ENCODE measurements at regions of chr22 and their contacts with region 1.

Region 1: GRCh38 chr22:50326959-50327710 is at the start of gene DENND6B:
- DNase-seq: peak; percentile 97
- H3K4me3 ChIP-seq: peak within 1 kb of the TSS; percentile 59 to 75
- H3K27ac ChIP-seq: peak within 1 kb of the TSS; percentile 62 to 78
- H3K4me1 ChIP-seq: peaks cover 6 to 12% of the 10 kb centered on the region in 2 experiments; a peak in 2 of 4 replicates
- H3K27me3 ChIP-seq: no peaks in the 10 kb centered on the region
- CTCF ChIP-seq: peak; percentile 25; the same call in 1 of the 2 replicates
- EP300 ChIP-seq: 0 out of 4 replicates have a peak, but pooled peaks of 1 of the 2 experiments have one; percentile 6
- RAD21 ChIP-seq: peak; percentile 50; the same call in 1 of the 2 replicates
- polyA plus RNA-seq, gene DENND6B: 5.6 and 5.8 TPM in 2 replicates

Region 2: GRCh38 chr22:50250555-50251476 is 76.3 kb before region 1 on chr22 and contains the start of gene HDAC10:
- CTCF ChIA-PET with region 1: interaction called, 19 read pairs
- POLR2A ChIA-PET with region 1: interaction called, 4 read pairs
- DNase-seq: peak; percentile 94
- H3K4me3 ChIP-seq: peak within 1 kb of the TSS; percentile 80 to 89
- H3K27ac ChIP-seq: peak within 1 kb of the TSS; percentile 62 to 86
- H3K4me1 ChIP-seq: peaks cover 6 to 54% of the 10 kb centered on the region in 2 experiments; a peak in 2 of 4 replicates
- H3K27me3 ChIP-seq: no peaks in the 10 kb centered on the region
- CTCF ChIP-seq: no peak
- EP300 ChIP-seq: no peak
- RAD21 ChIP-seq: no peak
- polyA plus RNA-seq, gene HDAC10: 51.9 and 55.1 TPM in 2 replicates

Region 3: DNA sequence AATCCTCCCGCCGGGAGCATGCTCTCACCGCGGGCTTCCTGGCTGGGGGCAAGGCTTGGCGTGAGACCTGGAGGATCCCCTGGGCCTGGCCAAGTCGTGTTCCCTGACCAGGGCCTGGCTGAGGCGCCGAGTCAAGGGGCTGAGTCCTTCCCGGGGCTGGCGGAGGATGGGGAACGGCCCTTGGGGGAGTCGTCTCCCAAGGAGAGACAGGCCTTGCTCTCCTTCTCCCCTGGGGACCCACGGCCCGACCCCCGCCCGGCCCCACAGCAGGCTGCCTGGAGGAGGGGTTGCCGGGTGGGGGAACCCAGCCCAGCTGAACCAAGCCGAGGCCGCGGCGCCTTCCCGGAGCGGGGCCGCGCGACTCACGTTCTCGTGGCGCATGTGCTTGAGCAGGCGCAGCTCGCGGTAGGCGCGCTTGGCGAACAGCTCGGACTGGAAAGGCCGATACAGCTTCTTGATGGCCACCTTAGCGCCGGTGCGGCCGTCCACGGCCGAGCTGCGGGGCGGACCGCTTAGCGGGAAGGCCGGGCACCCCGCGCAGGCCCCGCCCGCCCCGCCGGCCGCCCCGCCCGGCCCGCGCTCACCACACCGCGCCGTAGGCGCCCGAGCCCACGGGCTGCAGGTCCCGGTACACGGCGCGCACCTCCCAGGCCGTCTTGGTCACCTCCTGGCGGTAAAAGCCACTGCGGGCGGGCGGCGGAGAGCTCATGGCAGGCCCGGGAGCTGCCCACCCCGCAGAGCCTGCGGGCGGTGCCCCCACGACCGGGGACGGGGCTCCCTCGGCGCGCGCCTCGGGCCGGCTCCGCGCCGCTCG is 66.1 kb before region 1 on chr22:
- CTCF ChIA-PET with region 1: interaction called, 29 read pairs
- POLR2A ChIA-PET with region 1: no interaction called
- DNase-seq: peak; percentile 84
- H3K4me3 ChIP-seq: peak overlapping the region; percentile 67 to 72
- H3K27ac ChIP-seq: peak overlapping the region; percentile 26 to 81
- H3K4me1 ChIP-seq: peaks cover 14 to 25% of the 10 kb centered on the region in 2 experiments; a peak in 2 of 4 replicates
- H3K27me3 ChIP-seq: no peaks in the 10 kb centered on the region
- CTCF ChIP-seq: no peak
- EP300 ChIP-seq: no peak
- RAD21 ChIP-seq: no peak

Region 4: GRCh38 chr22:50305923-50306566 is 21.1 kb before region 1 on chr22:
- CTCF ChIA-PET with region 1: interaction called, 14 read pairs
- POLR2A ChIA-PET with region 1: interaction called, 5 read pairs
- DNase-seq: peak; percentile 77
- H3K4me3 ChIP-seq: peak overlapping the region; percentile 95 to 98
- H3K27ac ChIP-seq: peak overlapping the region; percentile 95 to 97
- H3K4me1 ChIP-seq: peaks cover 46 to 63% of the 10 kb centered on the region in 2 experiments; a peak in 3 of 4 replicates
- H3K27me3 ChIP-seq: no peaks in the 10 kb centered on the region
- CTCF ChIP-seq: no peak
- EP300 ChIP-seq: peak in 1 of 2 experiments; percentile 65; a peak in 1 of 4 replicates
- RAD21 ChIP-seq: no peak

Region 5: GRCh38 chr22:50314455-50315288 is 12.5 kb before region 1 on chr22:
- CTCF ChIA-PET with region 1: interaction called, 17 read pairs
- POLR2A ChIA-PET with region 1: interaction called, 6 read pairs
- DNase-seq: peak; percentile 22
- H3K4me3 ChIP-seq: no peak overlapping the region
- H3K27ac ChIP-seq: no peak overlapping the region
- H3K4me1 ChIP-seq: no peaks in the 10 kb centered on the region
- H3K27me3 ChIP-seq: no peaks in the 10 kb centered on the region
- CTCF ChIP-seq: no peak
- EP300 ChIP-seq: no peak
- RAD21 ChIP-seq: no peak

Region 6: GRCh38 chr22:50432131-50432876 is 105.2 kb after region 1 on chr22:
- CTCF ChIA-PET with region 1: no interaction called
- POLR2A ChIA-PET with region 1: no interaction called
- DNase-seq: no peak
- H3K4me3 ChIP-seq: no peak overlapping the region
- H3K27ac ChIP-seq: no peak overlapping the region
- H3K4me1 ChIP-seq: no peaks in the 10 kb centered on the region
- H3K27me3 ChIP-seq: no peaks in the 10 kb centered on the region
- CTCF ChIP-seq: no peak
- EP300 ChIP-seq: no peak
- RAD21 ChIP-seq: no peak

Region 7: DNA sequence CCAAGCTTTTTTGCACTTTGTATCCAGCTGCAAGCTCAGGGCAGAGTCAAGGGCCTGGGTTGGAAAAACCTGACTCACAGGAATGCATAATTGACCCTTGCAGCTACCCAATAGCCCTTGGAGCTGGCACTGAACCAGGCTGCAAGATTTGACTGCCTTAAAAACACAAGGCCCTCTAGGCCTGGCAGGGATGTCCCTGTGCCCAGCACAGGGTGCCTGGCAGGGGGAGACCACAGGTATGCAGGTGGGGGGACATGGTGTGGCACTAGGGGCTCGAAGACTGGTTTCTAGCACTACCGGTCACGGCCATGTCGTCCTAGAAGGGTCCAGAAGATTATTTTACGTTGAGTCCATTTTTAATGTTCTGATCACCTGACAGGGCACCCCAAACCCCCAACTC is 117.5 kb after region 1 on chr22:
- CTCF ChIA-PET with region 1: no interaction called
- POLR2A ChIA-PET with region 1: no interaction called
- DNase-seq: no peak
- H3K4me3 ChIP-seq: no peak overlapping the region
- H3K27ac ChIP-seq: no peak overlapping the region
- H3K4me1 ChIP-seq: peaks cover 5 to 9% of the 10 kb centered on the region in 2 experiments; a peak in 1 of 4 replicates
- H3K27me3 ChIP-seq: no peaks in the 10 kb centered on the region
- CTCF ChIP-seq: no peak
- EP300 ChIP-seq: no peak
- RAD21 ChIP-seq: no peak

Measured in SK-N-SH (cell line).